Mammary epithelial cell (primary cell): ENCODE measurements at regions of chr5 and their contacts with region 1.

Region 1: DNA sequence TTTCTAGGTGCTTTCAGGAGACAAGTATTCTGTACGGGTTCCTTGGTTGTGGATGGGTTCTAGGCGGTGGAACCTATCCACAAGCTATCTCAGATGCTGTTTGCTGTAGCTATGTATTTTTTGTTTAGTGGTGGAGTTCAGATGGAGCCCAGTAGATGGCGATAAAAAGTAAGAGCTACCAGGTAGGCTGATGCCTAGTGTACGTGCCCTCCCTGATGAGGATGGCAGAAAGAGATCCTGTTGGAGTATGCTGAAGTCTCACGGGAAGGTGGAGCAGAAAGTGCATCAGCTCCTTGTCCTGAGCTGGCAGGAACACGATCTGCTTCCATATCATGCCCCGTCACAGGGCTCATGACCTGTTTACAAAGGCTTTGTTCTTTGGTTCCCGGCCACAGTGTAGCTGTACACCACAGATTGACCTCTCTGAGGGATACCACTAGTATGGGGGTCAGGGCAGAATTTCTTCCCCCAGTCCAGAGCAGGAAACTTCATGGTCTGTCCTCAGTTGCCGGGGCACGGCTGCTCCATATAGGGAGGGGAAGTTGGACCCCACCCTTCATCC is 12.6 kb upstream of the UGT3A2 start:
- DNase-seq: peak; percentile 58
- H3K4me3 ChIP-seq: no peak overlapping the region
- H3K27ac ChIP-seq: no peak overlapping the region
- H3K4me1 ChIP-seq: no peaks in the 10 kb centered on the region
- H3K27me3 ChIP-seq: no peaks in the 10 kb centered on the region
- CTCF ChIP-seq: peak; percentile 71 to 79

Region 2: GRCh38 chr5:35651002-35651756 is 428.1 kb before region 1 on chr5:
- CTCF ChIA-PET with region 1: no interaction called
- dilution Hi-C with region 1: no loop called
- in situ Hi-C with region 1: no loop called
- intact Hi-C with region 1: no loop called
- DNase-seq: peak; percentile 33
- H3K4me3 ChIP-seq: no peak overlapping the region
- H3K27ac ChIP-seq: no peak overlapping the region
- H3K4me1 ChIP-seq: no peaks in the 10 kb centered on the region
- H3K27me3 ChIP-seq: no peaks in the 10 kb centered on the region
- CTCF ChIP-seq: peak; percentile 47 to 66

Region 3: GRCh38 chr5:35741126-35741716 is 338.1 kb before region 1 on chr5:
- CTCF ChIA-PET with region 1: no interaction called
- dilution Hi-C with region 1: no loop called
- in situ Hi-C with region 1: no loop called
- intact Hi-C with region 1: no loop called
- DNase-seq: no peak
- H3K4me3 ChIP-seq: no peak overlapping the region
- H3K27ac ChIP-seq: no peak overlapping the region
- H3K4me1 ChIP-seq: no peaks in the 10 kb centered on the region
- H3K27me3 ChIP-seq: no peaks in the 10 kb centered on the region
- CTCF ChIP-seq: no peak

Region 4: GRCh38 chr5:36151434-36152323 is 72.4 kb after region 1 on chr5 and contains the starts of genes LMBRD2 and SKP2:
- CTCF ChIA-PET with region 1: interaction called, 11 read pairs
- dilution Hi-C with region 1: no loop called
- in situ Hi-C with region 1: no loop called
- intact Hi-C with region 1: loop called (anchors 10 kb)
- DNase-seq: peak; percentile 97
- H3K4me3 ChIP-seq: peak within 1 kb of the TSS; percentile 84 to 91 (median 91)
- H3K27ac ChIP-seq: peak within 1 kb of the TSS; percentile 52
- H3K4me1 ChIP-seq: peaks cover 25% of the 10 kb centered on the region
- H3K27me3 ChIP-seq: no peaks in the 10 kb centered on the region
- CTCF ChIP-seq: no peak
- total RNA-seq, gene LMBRD2: 8.8 to 20.5 TPM
- total RNA-seq, gene SKP2: 39.3 to 53.3 TPM

Region 5: DNA sequence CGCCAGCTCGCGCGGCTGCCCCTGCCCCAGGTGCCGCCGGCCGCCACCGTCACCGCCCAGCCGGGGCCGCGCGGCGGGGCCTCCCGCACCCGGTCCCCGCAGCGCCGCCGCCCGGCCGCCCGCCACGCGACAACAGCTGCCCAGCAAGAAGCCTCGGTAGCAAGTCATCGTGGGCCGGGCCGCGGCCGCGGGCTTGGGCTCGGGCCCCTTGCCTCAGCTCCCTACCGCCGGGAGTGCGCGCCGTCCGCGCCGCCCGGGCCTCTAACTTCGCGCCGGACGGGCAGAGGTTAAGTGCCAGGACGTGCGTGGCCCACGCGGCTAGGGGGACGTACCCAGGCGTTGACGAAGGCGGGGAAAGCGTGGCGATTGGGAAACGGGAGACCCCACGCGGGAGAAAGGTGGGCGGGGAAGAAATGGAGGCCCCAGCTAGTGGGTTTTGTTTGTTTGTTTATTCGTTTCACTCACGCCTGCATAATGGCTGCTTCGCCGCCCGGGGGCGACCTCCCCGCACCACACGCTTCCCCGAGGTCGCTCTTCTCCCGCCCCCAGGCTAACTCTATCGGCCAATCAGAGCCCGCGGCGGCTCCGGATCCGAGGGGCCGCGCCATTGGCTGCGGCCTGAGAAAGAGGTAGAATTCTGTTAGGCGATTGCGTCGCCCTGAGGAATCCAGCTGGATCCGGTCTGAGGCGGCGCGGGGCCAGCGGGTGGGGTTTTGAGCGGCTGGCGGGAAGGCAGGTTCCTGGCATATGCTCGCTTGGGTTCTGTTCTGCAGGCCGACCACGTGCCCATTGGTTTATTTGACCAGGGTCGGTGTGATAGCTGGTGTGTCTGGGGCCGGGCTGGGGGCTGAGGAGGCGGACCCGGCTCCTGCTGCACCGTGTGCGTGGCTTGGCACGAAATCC is 162.6 kb after region 1 on chr5 and contains the start of gene NADK2:
- CTCF ChIA-PET with region 1: interaction called, 5 read pairs
- dilution Hi-C with region 1: no loop called
- in situ Hi-C with region 1: no loop called
- intact Hi-C with region 1: loop called (anchors 10 kb)
- DNase-seq: peak; percentile 92
- H3K4me3 ChIP-seq: peak within 1 kb of the TSS; percentile 86 to 88 (median 86)
- H3K27ac ChIP-seq: peak within 1 kb of the TSS; percentile 82
- H3K4me1 ChIP-seq: peaks cover 18% of the 10 kb centered on the region
- H3K27me3 ChIP-seq: no peaks in the 10 kb centered on the region
- CTCF ChIP-seq: peak; percentile 23 to 52
- total RNA-seq, gene NADK2: 18.5 to 21.1 TPM

Region 6: DNA sequence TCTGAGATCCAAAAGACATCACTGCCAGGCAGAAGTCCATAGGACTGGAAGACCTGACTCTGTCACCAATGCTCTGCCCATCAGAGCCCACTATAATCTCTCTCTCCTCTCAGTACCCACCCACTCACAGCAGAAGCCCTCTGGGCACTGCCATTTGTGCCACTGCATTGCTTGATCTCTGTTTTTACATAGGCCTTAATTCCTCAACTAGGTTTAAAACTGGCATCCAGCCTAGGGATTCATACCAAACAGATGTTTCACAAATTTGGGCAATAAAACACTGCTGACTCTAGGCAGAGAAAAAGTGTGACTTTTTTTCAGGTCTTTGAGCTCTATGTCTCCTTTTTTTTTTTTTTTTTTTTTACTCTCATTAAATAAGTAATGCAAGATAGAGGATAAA is 313.5 kb after region 1 on chr5:
- CTCF ChIA-PET with region 1: no interaction called
- dilution Hi-C with region 1: no loop called
- in situ Hi-C with region 1: no loop called
- intact Hi-C with region 1: loop called (anchors 1 kb)
- DNase-seq: peak; percentile 24
- H3K4me3 ChIP-seq: no peak overlapping the region
- H3K27ac ChIP-seq: no peak overlapping the region
- H3K4me1 ChIP-seq: no peaks in the 10 kb centered on the region
- H3K27me3 ChIP-seq: no peaks in the 10 kb centered on the region
- CTCF ChIP-seq: no peak